ENCODE measurements at regions of chr6 and their contacts with region 1.

Region 1: DNA sequence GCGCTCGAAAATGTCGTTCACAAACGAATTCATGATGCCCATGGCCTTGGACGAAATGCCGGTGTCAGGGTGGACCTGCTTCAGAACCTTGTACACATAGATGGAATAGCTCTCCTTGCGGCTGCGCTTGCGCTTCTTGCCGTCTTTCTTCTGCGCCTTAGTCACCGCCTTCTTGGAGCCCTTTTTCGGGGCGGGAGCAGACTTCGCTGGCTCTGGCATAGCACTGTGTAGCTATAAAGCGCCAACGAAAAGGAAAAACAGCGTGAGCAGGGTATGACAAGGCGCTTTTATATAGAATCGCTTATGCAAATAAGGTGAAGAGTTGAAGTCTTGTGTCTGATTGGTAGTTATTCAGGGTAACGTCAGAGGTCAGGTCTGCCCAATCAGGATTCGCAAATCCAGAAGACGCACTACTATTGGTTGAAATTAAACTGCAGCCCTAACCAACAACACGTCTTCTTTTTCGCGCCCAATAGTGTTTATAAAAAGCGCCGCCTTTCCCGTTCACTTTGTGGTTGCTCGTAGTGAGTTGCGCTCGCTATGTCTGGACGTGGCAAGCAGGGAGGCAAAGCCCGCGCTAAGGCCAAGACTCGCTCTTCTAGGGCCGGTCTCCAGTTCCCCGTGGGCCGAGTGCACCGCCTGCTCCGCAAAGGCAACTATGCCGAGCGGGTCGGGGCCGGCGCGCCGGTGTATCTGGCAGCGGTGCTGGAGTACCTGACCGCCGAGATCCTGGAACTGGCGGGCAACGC is 114.8 kb upstream of the PRSS16 start:
- DNase-seq: peak; percentile 80 to 99 (median 88)
- ATAC-seq: peak; percentile 79
- H3K4me3 ChIP-seq: peak overlapping the region; percentile 75
- H3K4me3 Mint-ChIP-seq: no peak overlapping the region
- H3K27ac ChIP-seq: peak overlapping the region; percentile 79 to 81
- H3K27ac Mint-ChIP-seq: no peak overlapping the region
- H3K4me1 ChIP-seq: peaks cover 31% of the 10 kb centered on the region
- H3K4me1 Mint-ChIP-seq: peaks cover 12% of the 10 kb centered on the region
- H3K27me3 ChIP-seq: no peaks in the 10 kb centered on the region
- H3K27me3 Mint-ChIP-seq: no peaks in the 10 kb centered on the region
- CTCF ChIP-seq: no peak

Region 2: DNA sequence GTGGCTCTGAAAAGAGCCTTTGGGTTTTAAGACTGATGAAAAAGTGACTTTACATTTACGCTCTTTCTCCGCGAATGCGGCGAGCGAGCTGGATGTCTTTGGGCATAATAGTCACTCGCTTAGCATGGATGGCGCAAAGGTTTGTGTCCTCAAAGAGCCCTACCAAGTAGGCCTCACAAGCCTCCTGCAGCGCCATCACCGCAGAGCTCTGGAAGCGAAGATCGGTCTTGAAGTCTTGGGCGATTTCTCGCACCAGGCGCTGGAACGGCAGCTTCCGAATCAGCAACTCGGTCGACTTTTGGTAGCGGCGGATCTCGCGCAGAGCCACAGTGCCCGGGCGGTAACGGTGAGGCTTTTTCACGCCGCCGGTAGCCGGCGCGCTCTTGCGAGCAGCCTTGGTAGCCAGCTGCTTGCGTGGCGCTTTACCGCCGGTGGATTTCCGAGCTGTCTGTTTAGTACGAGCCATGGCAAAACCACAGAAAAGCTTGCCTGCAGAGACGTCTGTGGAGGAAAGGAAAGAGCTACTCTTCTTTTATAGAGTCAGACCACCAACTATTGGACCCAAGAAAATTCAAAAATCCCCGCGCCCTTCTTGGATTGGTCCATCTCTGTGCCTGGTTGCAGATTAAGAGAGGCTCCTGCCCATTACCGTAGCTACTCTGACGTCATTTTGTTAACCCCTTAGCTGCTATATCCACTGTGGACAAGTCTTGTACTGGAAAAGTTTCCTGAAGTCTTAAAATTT is 1100.9 kb before region 1 on chr6:
- CTCF ChIA-PET with region 1: no interaction called
- POLR2A ChIA-PET with region 1: interaction called, 23 read pairs
- intact Hi-C with region 1: loop called (anchors 5 to 10 kb)
- DNase-seq: peak; percentile 73 to 94 (median 81)
- ATAC-seq: peak; percentile 65
- H3K4me3 ChIP-seq: peak overlapping the region; percentile 64
- H3K4me3 Mint-ChIP-seq: peak overlapping the region; percentile 97
- H3K27ac ChIP-seq: peak overlapping the region; percentile 42 to 72
- H3K27ac Mint-ChIP-seq: peak overlapping the region; percentile 99
- H3K4me1 ChIP-seq: peaks cover 35% of the 10 kb centered on the region
- H3K4me1 Mint-ChIP-seq: peaks cover 46% of the 10 kb centered on the region
- H3K27me3 ChIP-seq: no peaks in the 10 kb centered on the region
- H3K27me3 Mint-ChIP-seq: no peaks in the 10 kb centered on the region
- CTCF ChIP-seq: peak; percentile 22

Region 3: GRCh38 chr6:26175428-26176181 is 957.1 kb before region 1 on chr6:
- CTCF ChIA-PET with region 1: no interaction called
- POLR2A ChIA-PET with region 1: interaction called, 14 read pairs
- intact Hi-C with region 1: no loop called
- DNase-seq: peak in 11 of 14 experiments; percentile 13 to 85 (median 54)
- ATAC-seq: no peak
- H3K4me3 ChIP-seq: no peak overlapping the region
- H3K4me3 Mint-ChIP-seq: peak overlapping the region; percentile 83
- H3K27ac ChIP-seq: peak overlapping the region in 1 of 2 donors; percentile 41
- H3K27ac Mint-ChIP-seq: peak overlapping the region; percentile 93
- H3K4me1 ChIP-seq: peaks cover 17% of the 10 kb centered on the region
- H3K4me1 Mint-ChIP-seq: peaks cover 53% of the 10 kb centered on the region
- H3K27me3 ChIP-seq: no peaks in the 10 kb centered on the region
- H3K27me3 Mint-ChIP-seq: no peaks in the 10 kb centered on the region
- CTCF ChIP-seq: peak; percentile 87

Region 4: DNA sequence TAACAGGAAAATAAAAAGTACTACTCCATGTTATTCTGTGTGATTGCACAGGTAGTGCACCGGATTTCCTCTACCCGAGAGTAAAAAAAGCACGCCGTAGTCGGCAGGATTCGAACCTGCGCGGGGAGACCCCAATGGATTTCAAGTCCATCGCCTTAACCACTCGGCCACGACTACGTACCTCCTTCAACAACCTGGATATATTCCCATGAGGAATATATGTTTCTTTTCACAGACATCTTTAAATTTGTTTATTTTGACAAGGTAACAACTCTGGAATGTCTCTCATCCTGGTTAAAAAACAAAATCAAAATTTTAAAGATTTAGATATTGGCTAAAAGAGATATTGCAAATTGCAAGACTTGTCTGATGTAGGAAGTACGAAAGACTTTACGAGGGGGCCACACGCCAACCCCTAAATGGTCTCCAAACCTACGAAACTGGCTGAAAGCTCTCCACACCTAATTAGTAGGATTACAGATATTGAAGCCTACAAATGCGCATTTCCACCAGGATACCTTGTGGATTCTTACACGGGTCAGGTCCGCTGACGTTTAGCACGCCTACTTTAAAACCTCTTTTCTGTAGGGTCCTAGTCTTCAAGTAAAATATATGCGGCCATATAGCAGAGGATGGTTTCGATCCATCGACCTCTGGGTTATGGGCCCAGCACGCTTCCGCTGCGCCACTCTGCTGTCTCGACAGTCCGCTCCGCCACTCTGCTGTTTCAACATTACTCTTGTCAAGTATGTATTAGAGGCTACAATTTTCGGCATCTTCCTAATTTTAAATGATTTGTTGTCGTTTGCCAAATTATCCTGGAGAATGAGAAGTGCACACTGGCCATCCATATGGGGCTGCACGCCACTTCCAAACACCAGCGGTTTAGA is 820.0 kb before region 1 on chr6:
- CTCF ChIA-PET with region 1: no interaction called
- POLR2A ChIA-PET with region 1: no interaction called
- intact Hi-C with region 1: loop called in 1 of 2 experiments (anchors 10 kb)
- DNase-seq: peak; percentile 73 to 92 (median 82)
- ATAC-seq: peak; percentile 54
- H3K4me3 ChIP-seq: peak overlapping the region; percentile 69
- H3K4me3 Mint-ChIP-seq: peak overlapping the region; percentile 92
- H3K27ac ChIP-seq: peak overlapping the region in 1 of 2 donors; percentile 24
- H3K27ac Mint-ChIP-seq: peak overlapping the region; percentile 93
- H3K4me1 ChIP-seq: peaks cover 7% of the 10 kb centered on the region
- H3K4me1 Mint-ChIP-seq: peaks cover 44% of the 10 kb centered on the region
- H3K27me3 ChIP-seq: no peaks in the 10 kb centered on the region
- H3K27me3 Mint-ChIP-seq: peaks cover 30% of the 10 kb centered on the region
- CTCF ChIP-seq: no peak

Region 5: GRCh38 chr6:27177485-27178406 is 45.0 kb after region 1 on chr6:
- CTCF ChIA-PET with region 1: interaction called, 3 read pairs
- POLR2A ChIA-PET with region 1: interaction called, 15 read pairs
- intact Hi-C with region 1: no loop called
- DNase-seq: peak; percentile 44 to 90 (median 64)
- ATAC-seq: peak; percentile 64
- H3K4me3 ChIP-seq: peak overlapping the region; percentile 89
- H3K4me3 Mint-ChIP-seq: peak overlapping the region; percentile 99
- H3K27ac ChIP-seq: peak overlapping the region; percentile 27 to 63
- H3K27ac Mint-ChIP-seq: peak overlapping the region; percentile 100
- H3K4me1 ChIP-seq: peaks cover 21% of the 10 kb centered on the region
- H3K4me1 Mint-ChIP-seq: peaks cover 24% of the 10 kb centered on the region
- H3K27me3 ChIP-seq: no peaks in the 10 kb centered on the region
- H3K27me3 Mint-ChIP-seq: peaks cover 24% of the 10 kb centered on the region
- CTCF ChIP-seq: peak; percentile 54

Region 6: GRCh38 chr6:27809939-27810767 is 677.4 kb after region 1 on chr6:
- CTCF ChIA-PET with region 1: no interaction called
- POLR2A ChIA-PET with region 1: interaction called, 100 read pairs
- intact Hi-C with region 1: no loop called
- DNase-seq: peak; percentile 63 to 98 (median 75)
- ATAC-seq: peak; percentile 61
- H3K4me3 ChIP-seq: peak overlapping the region; percentile 64
- H3K4me3 Mint-ChIP-seq: peak overlapping the region; percentile 95
- H3K27ac ChIP-seq: peak overlapping the region; percentile 69 to 81
- H3K27ac Mint-ChIP-seq: peak overlapping the region; percentile 96
- H3K4me1 ChIP-seq: peaks cover 39% of the 10 kb centered on the region
- H3K4me1 Mint-ChIP-seq: peaks cover 68% of the 10 kb centered on the region
- H3K27me3 ChIP-seq: no peaks in the 10 kb centered on the region
- H3K27me3 Mint-ChIP-seq: no peaks in the 10 kb centered on the region
- CTCF ChIP-seq: no peak

Measured in CD4-positive, alpha-beta T cell (primary cell).